K562 (cell line): ENCODE measurements at regions of chr4 and their contacts with region 1.

Region 1: DNA sequence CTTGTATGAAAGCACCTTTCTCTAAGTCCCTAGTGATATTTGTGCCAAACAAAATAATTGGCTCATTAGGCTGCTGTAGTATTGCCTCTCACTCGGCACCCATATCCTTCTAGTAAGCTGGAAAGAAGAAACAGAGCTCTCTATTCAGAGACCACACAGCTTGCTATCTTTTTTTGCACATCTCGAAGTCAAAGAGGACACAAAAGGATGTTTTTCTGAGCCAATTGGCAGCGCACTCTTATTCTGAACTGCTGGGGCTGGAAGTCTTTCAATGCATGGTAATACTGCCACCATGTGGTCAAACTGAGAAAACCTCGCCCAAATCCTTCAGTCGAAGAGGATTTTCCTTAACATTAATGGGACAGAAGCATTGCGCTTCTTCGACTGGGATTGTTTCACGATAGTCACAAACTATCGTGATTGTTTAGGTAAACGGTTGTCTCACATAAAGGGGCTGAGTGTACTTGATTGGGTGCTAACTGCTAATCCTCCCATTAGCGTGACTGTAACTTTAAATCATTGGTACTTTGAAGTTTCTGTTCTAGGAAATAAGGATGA is 572.0 kb upstream of the LCORL start:
- DNase-seq: peak; percentile 61 to 74 (median 66)
- ATAC-seq: peak; percentile 87
- H3K4me3 ChIP-seq: no peak overlapping the region
- H3K27ac ChIP-seq: no peak overlapping the region
- H3K4me1 ChIP-seq: no peaks in the 10 kb centered on the region
- H3K27me3 ChIP-seq: no peaks in the 10 kb centered on the region
- CTCF ChIP-seq: peak; percentile 67 to 85 (median 76)
- EP300 ChIP-seq: no peak
- POLR2A ChIP-seq: no peak
- RAD21 ChIP-seq: peak; percentile 81 to 83

Region 2: GRCh38 chr4:16942491-16942890 is 1651.0 kb before region 1 on chr4:
- CTCF ChIA-PET with region 1: no interaction called
- POLR2A ChIA-PET with region 1: no interaction called
- in situ Hi-C with region 1: no loop called
- intact Hi-C with region 1: no loop called
- DNase-seq: peak in 3 of 4 experiments; percentile 9 to 16 (median 13)
- ATAC-seq: peak; percentile 78
- H3K4me3 ChIP-seq: no peak overlapping the region
- H3K27ac ChIP-seq: no peak overlapping the region
- H3K4me1 ChIP-seq: no peaks in the 10 kb centered on the region
- H3K27me3 ChIP-seq: no peaks in the 10 kb centered on the region
- CTCF ChIP-seq: no peak
- EP300 ChIP-seq: no peak
- POLR2A ChIP-seq: no peak
- RAD21 ChIP-seq: no peak

Region 3: GRCh38 chr4:17347445-17347844 is 1246.1 kb before region 1 on chr4:
- CTCF ChIA-PET with region 1: no interaction called
- POLR2A ChIA-PET with region 1: no interaction called
- in situ Hi-C with region 1: loop called (anchors 25 kb)
- intact Hi-C with region 1: loop called (anchors 10 kb)
- DNase-seq: peak; percentile 15 to 46 (median 30)
- ATAC-seq: peak; percentile 77
- H3K4me3 ChIP-seq: no peak overlapping the region
- H3K27ac ChIP-seq: no peak overlapping the region
- H3K4me1 ChIP-seq: no peaks in the 10 kb centered on the region
- H3K27me3 ChIP-seq: no peaks in the 10 kb centered on the region
- CTCF ChIP-seq: peak; percentile 55 to 71 (median 67)
- EP300 ChIP-seq: no peak
- POLR2A ChIP-seq: no peak
- RAD21 ChIP-seq: peak; percentile 48 to 68

Region 4: GRCh38 chr4:17366496-17366895 is 1227.0 kb before region 1 on chr4:
- CTCF ChIA-PET with region 1: no interaction called
- POLR2A ChIA-PET with region 1: no interaction called
- in situ Hi-C with region 1: loop called (anchors 25 kb)
- intact Hi-C with region 1: no loop called
- DNase-seq: no peak
- ATAC-seq: no peak
- H3K4me3 ChIP-seq: no peak overlapping the region
- H3K27ac ChIP-seq: no peak overlapping the region
- H3K4me1 ChIP-seq: no peaks in the 10 kb centered on the region
- H3K27me3 ChIP-seq: no peaks in the 10 kb centered on the region
- CTCF ChIP-seq: no peak
- EP300 ChIP-seq: no peak
- POLR2A ChIP-seq: no peak
- RAD21 ChIP-seq: no peak

Region 5: DNA sequence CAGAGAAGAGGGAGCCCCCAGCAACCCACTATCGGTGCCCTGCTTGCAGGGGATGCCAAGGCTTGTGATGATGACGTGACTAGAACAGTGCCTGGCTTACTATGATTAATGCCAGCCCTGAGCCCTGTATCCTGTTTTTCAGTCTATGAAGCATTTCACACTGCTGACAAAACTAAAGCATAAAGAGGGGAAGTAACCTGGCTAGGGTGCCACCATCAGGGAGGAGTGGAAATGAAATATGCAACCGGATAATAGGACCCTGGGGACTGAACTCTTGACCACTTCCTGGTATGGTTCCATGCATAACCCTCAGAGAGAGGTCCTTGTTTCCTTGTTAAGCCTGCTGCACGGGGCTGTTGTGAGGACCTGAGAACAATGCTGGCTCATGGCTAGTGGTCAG is 928.8 kb before region 1 on chr4:
- CTCF ChIA-PET with region 1: no interaction called
- POLR2A ChIA-PET with region 1: no interaction called
- in situ Hi-C with region 1: loop called (anchors 25 kb)
- intact Hi-C with region 1: no loop called
- DNase-seq: peak in 1 of 4 experiments; percentile 16
- ATAC-seq: peak; percentile 71
- H3K4me3 ChIP-seq: no peak overlapping the region
- H3K27ac ChIP-seq: no peak overlapping the region
- H3K4me1 ChIP-seq: peaks cover 0 to 14% of the 10 kb centered on the region in 2 experiments; a peak in 2 of 5 replicates
- H3K27me3 ChIP-seq: peaks cover 13 to 14% of the 10 kb centered on the region in 2 experiments; a peak in 4 of 5 replicates
- CTCF ChIP-seq: no peak
- EP300 ChIP-seq: no peak
- POLR2A ChIP-seq: no peak
- RAD21 ChIP-seq: no peak